ENCODE measurements at regions of chr4 and their contacts with region 1.

Region 1: DNA sequence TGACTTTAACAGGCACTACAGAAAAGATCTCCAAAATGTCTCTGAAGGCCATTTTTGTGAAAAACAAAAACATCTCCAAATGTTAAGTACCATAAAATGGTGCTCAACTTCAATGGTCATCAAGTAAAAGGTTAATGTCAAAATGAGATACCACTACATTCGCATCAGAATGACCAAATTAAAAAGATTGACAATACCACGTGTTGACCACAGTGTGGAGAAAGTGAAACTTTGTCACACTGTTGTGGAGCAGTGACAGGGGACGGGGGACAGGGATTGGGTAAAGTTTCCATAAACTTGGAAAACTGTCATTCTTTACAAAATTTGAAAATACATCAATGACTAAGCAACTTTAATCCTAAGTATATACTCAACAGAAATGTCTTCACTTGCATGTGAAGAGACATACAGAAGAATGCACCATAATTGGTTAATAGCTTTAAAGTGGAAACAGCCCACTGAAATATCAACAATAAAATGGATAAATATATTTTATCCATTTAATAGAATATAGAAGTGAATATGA is 19.1 kb upstream of the CISD2 start:
- DNase-seq: no peak
- H3K4me3 ChIP-seq: no peak overlapping the region
- H3K27ac ChIP-seq: no peak overlapping the region
- H3K4me1 ChIP-seq: no peaks in the 10 kb centered on the region
- CTCF ChIP-seq: no peak

Region 2: GRCh38 chr4:102836596-102836995 is 13.0 kb before region 1 on chr4:
- CTCF ChIA-PET with region 1: no interaction called
- POLR2A ChIA-PET with region 1: interaction called, 21 read pairs
- intact Hi-C with region 1: no loop called
- DNase-seq: no peak
- H3K4me3 ChIP-seq: no peak overlapping the region
- H3K27ac ChIP-seq: no peak overlapping the region
- H3K4me1 ChIP-seq: peaks cover 7% of the 10 kb centered on the region
- CTCF ChIP-seq: no peak

Measured in OCI-LY7 (cell line).